ENCODE measurements at regions of chrX and their contacts with region 1.

Region 1: GRCh38 chrX:47030339-47030738 is 47.9 kb upstream of the RGN start:
- DNase-seq: peak; percentile 26
- H3K4me3 ChIP-seq: no peak overlapping the region
- H3K27ac ChIP-seq: no peak overlapping the region
- H3K27me3 ChIP-seq: no peaks in the 10 kb centered on the region
- CTCF ChIP-seq: peak; percentile 58

Region 2: GRCh38 chrX:46198858-46199257 is 831.5 kb before region 1 on chrX:
- CTCF ChIA-PET with region 1: no interaction called
- POLR2A ChIA-PET with region 1: no interaction called
- DNase-seq: no peak
- H3K4me3 ChIP-seq: no peak overlapping the region
- H3K27ac ChIP-seq: no peak overlapping the region
- H3K27me3 ChIP-seq: no peaks in the 10 kb centered on the region
- CTCF ChIP-seq: no peak

Region 3: DNA sequence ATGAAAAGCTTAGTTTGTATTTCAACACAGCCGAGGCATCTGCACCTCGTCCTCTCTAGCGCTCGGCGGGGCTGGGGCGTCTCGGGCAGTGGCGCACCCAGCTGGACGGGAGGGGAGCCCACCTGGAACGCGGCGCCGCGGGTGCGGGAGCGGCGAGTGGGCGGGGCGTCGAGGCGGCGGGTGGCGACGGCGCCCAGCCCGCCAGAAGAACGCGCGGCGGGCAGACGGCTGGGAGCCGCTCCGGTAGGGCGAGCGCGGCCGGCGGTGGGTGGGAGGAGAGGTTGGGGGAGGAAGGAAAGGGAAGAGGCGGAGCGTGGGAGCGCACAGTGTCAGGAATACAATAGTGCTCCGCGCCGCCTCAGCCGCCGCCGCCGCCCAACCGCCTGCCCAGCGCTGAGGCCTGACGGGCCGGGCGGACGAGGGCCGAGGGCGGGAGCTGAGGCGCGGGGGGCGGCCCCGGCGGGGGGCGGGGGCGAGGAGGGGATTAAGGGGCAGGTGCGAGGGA is 118.2 kb before region 1 on chrX and contains the start of gene JADE3:
- CTCF ChIA-PET with region 1: interaction called, 15 read pairs
- POLR2A ChIA-PET with region 1: no interaction called
- DNase-seq: no peak
- H3K4me3 ChIP-seq: peak within 1 kb of the TSS; percentile 68
- H3K27ac ChIP-seq: no peak within 1 kb of the TSS
- H3K27me3 ChIP-seq: peaks cover 3% of the 10 kb centered on the region
- CTCF ChIP-seq: no peak
- polyA plus RNA-seq, gene JADE3: 6.5 and 7.7 TPM in 2 replicates